AG04449 (cell line): ENCODE measurements at regions of chr11 and their contacts with region 1.

Region 1: GRCh38 chr11:10405855-10406592 is 49.0 kb upstream of the AMPD3 start:
- DNase-seq: peak; percentile 52
- H3K4me3 ChIP-seq: no peak overlapping the region
- CTCF ChIP-seq: peak; percentile 62

Region 2: GRCh38 chr11:9922806-9923205 is 483.2 kb before region 1 on chr11:
- CTCF ChIA-PET with region 1: no interaction called
- POLR2A ChIA-PET with region 1: no interaction called
- DNase-seq: no peak
- H3K4me3 ChIP-seq: no peak overlapping the region
- CTCF ChIP-seq: no peak

Region 3: GRCh38 chr11:10150800-10151199 is 255.2 kb before region 1 on chr11:
- CTCF ChIA-PET with region 1: no interaction called
- POLR2A ChIA-PET with region 1: no interaction called
- DNase-seq: no peak
- H3K4me3 ChIP-seq: no peak overlapping the region
- CTCF ChIP-seq: no peak

Region 4: GRCh38 chr11:10387206-10388083 is 18.6 kb before region 1 on chr11:
- CTCF ChIA-PET with region 1: interaction called, 16 read pairs
- POLR2A ChIA-PET with region 1: interaction called, 3 read pairs
- DNase-seq: peak; percentile 71
- H3K4me3 ChIP-seq: no peak overlapping the region
- CTCF ChIP-seq: no peak

Region 5: GRCh38 chr11:10426475-10426874 is 20.5 kb after region 1 on chr11:
- CTCF ChIA-PET with region 1: interaction called, 11 read pairs
- POLR2A ChIA-PET with region 1: no interaction called
- DNase-seq: no peak
- H3K4me3 ChIP-seq: no peak overlapping the region
- CTCF ChIP-seq: no peak

Region 6: DNA sequence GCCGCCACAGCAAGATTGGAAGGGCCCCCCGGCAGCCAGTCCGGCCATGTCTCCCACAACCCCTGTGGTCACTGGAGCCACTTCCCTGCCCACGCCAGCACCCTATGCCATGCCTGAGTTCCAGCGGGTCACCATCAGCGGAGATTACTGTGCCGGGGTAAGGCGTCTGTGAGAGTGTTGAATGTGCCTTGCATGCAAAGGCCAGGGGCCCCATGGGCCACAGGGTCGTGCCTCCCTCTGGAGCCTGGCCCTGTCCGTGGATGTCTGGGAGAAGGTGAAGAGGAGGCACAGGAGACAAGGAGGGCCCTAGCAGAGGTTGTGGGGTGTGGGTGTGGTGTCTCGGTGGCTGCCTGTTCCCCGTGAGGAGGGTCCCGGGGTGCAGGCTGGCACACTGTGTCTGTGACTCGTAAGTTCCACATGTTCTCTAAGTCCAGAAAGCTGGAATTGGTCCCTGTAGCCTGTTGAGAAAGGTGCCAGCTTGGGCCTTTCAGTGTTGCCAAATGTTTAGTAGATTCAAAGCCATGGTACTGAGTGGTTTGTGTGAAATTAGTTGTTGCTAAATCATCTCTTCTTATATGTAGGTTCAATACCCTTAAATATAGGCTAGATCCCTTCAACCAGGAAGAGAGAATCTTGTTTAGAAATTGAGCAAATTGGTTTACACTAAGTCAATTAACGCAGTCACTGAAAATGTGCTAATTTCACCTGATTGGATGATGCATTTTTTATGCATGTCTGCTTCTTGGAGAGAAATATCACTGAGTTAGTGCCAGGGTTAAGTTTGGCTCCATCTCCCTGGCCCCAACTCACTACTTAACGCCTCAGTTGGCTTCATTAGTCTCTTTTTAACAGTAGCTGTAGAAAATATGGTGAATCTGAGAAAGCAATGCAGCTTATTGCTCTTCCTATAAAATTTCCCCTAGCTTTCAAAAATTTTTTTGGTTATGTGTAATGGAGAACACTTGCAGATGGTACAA is 72.8 kb after region 1 on chr11:
- CTCF ChIA-PET with region 1: no interaction called
- POLR2A ChIA-PET with region 1: no interaction called
- DNase-seq: no peak
- H3K4me3 ChIP-seq: no peak overlapping the region
- CTCF ChIP-seq: no peak

Region 7: GRCh38 chr11:10653926-10654810 is 248.1 kb after region 1 on chr11:
- CTCF ChIA-PET with region 1: interaction called, 10 read pairs
- POLR2A ChIA-PET with region 1: no interaction called
- DNase-seq: no peak
- H3K4me3 ChIP-seq: no peak overlapping the region
- CTCF ChIP-seq: no peak

Region 8: DNA sequence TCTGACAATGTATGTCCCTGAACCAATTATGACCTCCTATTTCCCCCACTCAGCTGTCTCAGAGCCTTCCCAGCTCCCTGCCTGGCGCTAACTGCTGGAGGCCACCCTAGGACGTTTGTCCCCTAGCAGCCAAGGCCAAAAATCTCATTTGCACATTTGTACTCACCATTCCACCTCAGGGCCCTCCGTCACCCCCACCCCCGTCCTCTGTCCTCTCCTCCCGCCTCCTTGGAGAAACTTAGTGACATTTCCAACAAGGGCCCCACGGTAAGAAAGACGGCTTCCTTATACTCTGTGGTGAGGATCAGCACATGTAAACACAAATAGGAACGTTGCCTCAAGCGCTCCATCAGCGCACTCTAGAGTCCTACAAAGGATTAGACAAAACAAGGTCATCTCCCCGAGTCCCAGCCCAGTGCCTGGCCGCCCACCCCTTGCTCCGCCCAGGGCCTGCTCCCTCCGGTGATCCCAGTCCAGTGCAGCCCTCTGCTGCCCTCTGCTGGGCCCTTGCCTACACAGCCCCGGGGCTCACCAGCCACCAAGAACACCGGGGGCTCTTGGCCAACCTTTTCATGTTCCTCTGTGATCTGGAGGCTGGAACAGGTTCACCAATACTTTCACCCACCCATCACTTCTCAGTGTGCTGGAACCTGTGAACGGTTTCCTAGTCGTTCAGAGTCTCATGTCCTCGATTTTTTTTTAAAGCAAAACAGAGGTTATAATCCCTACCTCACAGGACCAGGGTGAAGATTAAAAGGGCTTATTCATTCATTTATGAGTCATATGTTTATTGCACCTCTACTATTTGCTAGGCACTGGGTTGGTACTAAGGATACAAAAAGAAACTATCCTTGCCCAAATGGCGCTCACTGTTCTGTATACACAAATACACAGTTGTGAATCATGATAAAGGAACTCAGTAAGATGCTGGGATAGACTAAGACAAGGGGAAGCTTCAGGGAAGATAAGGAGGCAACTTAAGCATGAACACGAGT is 329.8 kb after region 1 on chr11:
- CTCF ChIA-PET with region 1: interaction called, 41 read pairs
- POLR2A ChIA-PET with region 1: no interaction called
- DNase-seq: peak; percentile 87
- H3K4me3 ChIP-seq: peak overlapping the region; percentile 50
- CTCF ChIP-seq: peak; percentile 94